ENCODE measurements at regions of chr12 and their contacts with region 1.

Region 1: DNA sequence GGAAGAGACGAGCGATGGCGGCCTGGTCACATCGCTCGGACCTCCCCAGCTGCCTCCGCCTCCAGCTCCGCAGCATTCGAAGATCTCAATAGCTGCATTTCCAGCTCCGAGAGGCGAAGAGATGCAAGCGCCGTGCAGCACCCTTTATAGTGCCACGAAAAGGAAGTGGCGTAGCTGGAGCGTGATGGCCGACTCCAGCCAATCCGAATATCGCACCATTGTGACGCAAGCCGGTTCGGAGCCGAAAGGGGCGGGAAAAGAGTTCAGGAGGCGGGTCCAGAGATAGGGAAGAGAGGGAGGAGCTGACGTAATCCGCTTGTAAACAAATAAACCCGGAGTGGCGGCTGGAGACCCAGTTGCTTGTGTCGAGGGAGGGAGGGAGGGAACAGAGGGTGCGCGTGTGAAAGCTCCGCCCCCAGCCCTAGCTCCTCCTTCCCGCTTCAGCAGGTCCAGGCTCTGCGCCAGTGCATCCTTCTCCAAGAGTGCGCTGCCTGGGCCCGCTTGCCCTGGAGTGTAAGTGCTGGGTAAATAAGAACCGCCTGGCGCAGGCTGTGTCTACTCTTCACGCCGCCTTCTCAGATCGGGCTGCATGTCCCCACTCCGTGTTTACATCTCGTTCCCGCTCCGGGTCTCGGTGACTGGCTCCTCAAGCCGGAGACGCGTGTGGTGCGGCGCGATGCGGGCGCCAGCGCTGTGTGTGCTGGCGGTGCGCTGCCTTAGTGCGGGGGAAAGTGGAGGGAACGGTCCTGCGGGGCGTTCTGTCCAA is at the start of gene BTG1:
- H3K4me3 Mint-ChIP-seq: peak within 1 kb of the TSS; percentile 96
- H3K27ac Mint-ChIP-seq: peak within 1 kb of the TSS; percentile 92
- H3K4me1 Mint-ChIP-seq: peaks cover 40% of the 10 kb centered on the region
- H3K27me3 Mint-ChIP-seq: no peaks in the 10 kb centered on the region

Region 2: GRCh38 chr12:91811481-91812287 is 334.2 kb before region 1 on chr12:
- intact Hi-C with region 1: loop called (anchors 5 kb)
- H3K4me3 Mint-ChIP-seq: no peak overlapping the region
- H3K27ac Mint-ChIP-seq: no peak overlapping the region
- H3K4me1 Mint-ChIP-seq: no peaks in the 10 kb centered on the region
- H3K27me3 Mint-ChIP-seq: no peaks in the 10 kb centered on the region

Region 3: GRCh38 chr12:92059976-92060375 is 85.9 kb before region 1 on chr12:
- intact Hi-C with region 1: loop called (anchors 5 kb)
- H3K4me3 Mint-ChIP-seq: no peak overlapping the region
- H3K27ac Mint-ChIP-seq: no peak overlapping the region
- H3K4me1 Mint-ChIP-seq: peaks cover 27% of the 10 kb centered on the region
- H3K27me3 Mint-ChIP-seq: peaks cover 2% of the 10 kb centered on the region

Region 4: GRCh38 chr12:92570056-92570753 is 424.3 kb after region 1 on chr12:
- intact Hi-C with region 1: loop called (anchors 2 kb)
- H3K4me3 Mint-ChIP-seq: no peak overlapping the region
- H3K27ac Mint-ChIP-seq: no peak overlapping the region
- H3K4me1 Mint-ChIP-seq: peaks cover 17% of the 10 kb centered on the region
- H3K27me3 Mint-ChIP-seq: no peaks in the 10 kb centered on the region